Caco-2 (cell line): ENCODE measurements at regions of chr4 and their contacts with region 1.

Region 1: DNA sequence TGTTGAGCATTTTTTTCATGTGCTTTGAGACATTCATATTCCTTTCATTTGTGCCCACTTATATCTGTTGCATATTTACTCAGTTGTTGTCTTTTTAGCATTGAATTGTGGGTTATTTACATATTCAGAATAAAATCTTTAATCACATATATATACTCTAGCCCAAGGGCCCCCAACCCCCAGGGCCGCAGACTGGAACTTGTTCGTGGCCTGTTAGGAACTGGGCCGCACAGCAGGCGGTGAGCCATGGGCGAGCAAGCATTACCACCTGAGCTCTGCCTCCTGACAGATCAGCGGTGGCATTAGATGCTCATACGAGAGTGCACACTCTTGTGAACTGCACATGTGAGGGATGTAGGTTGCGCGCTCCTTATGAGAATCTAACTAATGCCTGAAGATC is 480.6 kb downstream of the KCTD8 start:
- DNase-seq: no peak
- H3K4me3 ChIP-seq: no peak overlapping the region
- H3K4me3 Mint-ChIP-seq: no peak overlapping the region
- H3K27ac Mint-ChIP-seq: no peak overlapping the region
- H3K4me1 ChIP-seq: no peaks in the 10 kb centered on the region
- H3K4me1 Mint-ChIP-seq: no peaks in the 10 kb centered on the region
- H3K27me3 ChIP-seq: no peaks in the 10 kb centered on the region
- H3K27me3 Mint-ChIP-seq: no peaks in the 10 kb centered on the region
- CTCF ChIP-seq: no peak

Region 2: GRCh38 chr4:43776371-43776770 is 191.6 kb before region 1 on chr4:
- CTCF ChIA-PET with region 1: no interaction called
- POLR2A ChIA-PET with region 1: no interaction called
- intact Hi-C with region 1: no loop called
- DNase-seq: no peak
- H3K4me3 ChIP-seq: no peak overlapping the region
- H3K4me3 Mint-ChIP-seq: no peak overlapping the region
- H3K27ac Mint-ChIP-seq: no peak overlapping the region
- H3K4me1 ChIP-seq: no peaks in the 10 kb centered on the region
- H3K4me1 Mint-ChIP-seq: no peaks in the 10 kb centered on the region
- H3K27me3 ChIP-seq: no peaks in the 10 kb centered on the region
- H3K27me3 Mint-ChIP-seq: no peaks in the 10 kb centered on the region
- CTCF ChIP-seq: peak in 1 of 2 experiments; percentile 28

Region 3: DNA sequence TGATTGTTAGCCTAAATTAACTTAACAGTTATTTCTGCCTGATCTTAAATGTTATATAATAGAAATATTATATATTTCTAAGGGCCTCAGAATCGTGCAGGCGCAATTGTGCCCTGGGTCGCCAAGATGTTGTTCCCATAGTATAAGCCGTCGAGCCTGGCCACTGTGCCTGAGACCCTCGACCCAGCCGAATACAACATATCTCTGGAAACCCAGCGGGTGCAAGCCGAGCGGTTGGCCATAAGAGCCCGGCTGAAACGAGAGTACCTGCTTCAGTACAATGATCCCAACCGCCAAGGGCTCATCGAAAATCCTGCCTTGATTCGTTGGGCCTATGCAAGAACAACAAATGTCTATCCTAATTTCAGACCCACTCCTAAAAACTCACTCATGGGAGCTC is 69.2 kb before region 1 on chr4:
- CTCF ChIA-PET with region 1: no interaction called
- POLR2A ChIA-PET with region 1: no interaction called
- intact Hi-C with region 1: no loop called
- DNase-seq: no peak
- H3K4me3 ChIP-seq: no peak overlapping the region
- H3K4me3 Mint-ChIP-seq: no peak overlapping the region
- H3K27ac Mint-ChIP-seq: no peak overlapping the region
- H3K4me1 ChIP-seq: no peaks in the 10 kb centered on the region
- H3K4me1 Mint-ChIP-seq: no peaks in the 10 kb centered on the region
- H3K27me3 ChIP-seq: no peaks in the 10 kb centered on the region
- H3K27me3 Mint-ChIP-seq: no peaks in the 10 kb centered on the region
- CTCF ChIP-seq: no peak

Region 4: DNA sequence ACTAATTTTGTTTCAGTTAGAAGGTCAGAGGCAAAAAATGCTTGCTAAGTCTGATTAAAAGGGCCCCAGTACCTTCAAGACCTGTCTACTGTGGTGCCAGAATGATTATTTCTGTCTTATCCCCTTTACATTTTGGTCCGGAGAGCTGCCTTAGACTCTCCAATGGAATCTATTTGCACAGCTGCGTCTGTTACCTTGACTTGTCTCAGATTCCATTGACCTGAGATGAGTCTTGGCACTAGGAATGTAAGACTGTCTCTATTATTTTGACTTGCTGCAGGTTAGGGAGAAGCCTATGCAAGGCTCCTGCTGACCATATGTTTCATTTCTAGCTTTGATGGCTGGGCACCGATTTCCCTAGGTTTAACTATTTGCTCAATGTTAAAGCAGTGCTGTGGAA is 23.0 kb after region 1 on chr4:
- CTCF ChIA-PET with region 1: no interaction called
- POLR2A ChIA-PET with region 1: no interaction called
- intact Hi-C with region 1: loop called (anchors 1 kb)
- DNase-seq: peak in 1 of 2 experiments; percentile 6
- H3K4me3 ChIP-seq: no peak overlapping the region
- H3K4me3 Mint-ChIP-seq: no peak overlapping the region
- H3K27ac Mint-ChIP-seq: no peak overlapping the region
- H3K4me1 ChIP-seq: no peaks in the 10 kb centered on the region; the same call in 1 of the 2 replicates
- H3K4me1 Mint-ChIP-seq: peaks cover 13% of the 10 kb centered on the region
- H3K27me3 ChIP-seq: no peaks in the 10 kb centered on the region
- H3K27me3 Mint-ChIP-seq: no peaks in the 10 kb centered on the region
- CTCF ChIP-seq: no peak

Region 5: GRCh38 chr4:44210750-44211149 is 242.7 kb after region 1 on chr4:
- CTCF ChIA-PET with region 1: no interaction called
- POLR2A ChIA-PET with region 1: no interaction called
- intact Hi-C with region 1: no loop called
- DNase-seq: no peak
- H3K4me3 ChIP-seq: no peak overlapping the region
- H3K4me3 Mint-ChIP-seq: no peak overlapping the region
- H3K27ac Mint-ChIP-seq: no peak overlapping the region
- H3K4me1 ChIP-seq: no peaks in the 10 kb centered on the region
- H3K4me1 Mint-ChIP-seq: no peaks in the 10 kb centered on the region
- H3K27me3 ChIP-seq: no peaks in the 10 kb centered on the region
- H3K27me3 Mint-ChIP-seq: no peaks in the 10 kb centered on the region
- CTCF ChIP-seq: peak in 1 of 2 experiments; percentile 11